Left ventricle myocardium inferior (tissue), 1 donor: ENCODE measurements at regions of chr3 and their contacts with region 1.

Region 1: DNA sequence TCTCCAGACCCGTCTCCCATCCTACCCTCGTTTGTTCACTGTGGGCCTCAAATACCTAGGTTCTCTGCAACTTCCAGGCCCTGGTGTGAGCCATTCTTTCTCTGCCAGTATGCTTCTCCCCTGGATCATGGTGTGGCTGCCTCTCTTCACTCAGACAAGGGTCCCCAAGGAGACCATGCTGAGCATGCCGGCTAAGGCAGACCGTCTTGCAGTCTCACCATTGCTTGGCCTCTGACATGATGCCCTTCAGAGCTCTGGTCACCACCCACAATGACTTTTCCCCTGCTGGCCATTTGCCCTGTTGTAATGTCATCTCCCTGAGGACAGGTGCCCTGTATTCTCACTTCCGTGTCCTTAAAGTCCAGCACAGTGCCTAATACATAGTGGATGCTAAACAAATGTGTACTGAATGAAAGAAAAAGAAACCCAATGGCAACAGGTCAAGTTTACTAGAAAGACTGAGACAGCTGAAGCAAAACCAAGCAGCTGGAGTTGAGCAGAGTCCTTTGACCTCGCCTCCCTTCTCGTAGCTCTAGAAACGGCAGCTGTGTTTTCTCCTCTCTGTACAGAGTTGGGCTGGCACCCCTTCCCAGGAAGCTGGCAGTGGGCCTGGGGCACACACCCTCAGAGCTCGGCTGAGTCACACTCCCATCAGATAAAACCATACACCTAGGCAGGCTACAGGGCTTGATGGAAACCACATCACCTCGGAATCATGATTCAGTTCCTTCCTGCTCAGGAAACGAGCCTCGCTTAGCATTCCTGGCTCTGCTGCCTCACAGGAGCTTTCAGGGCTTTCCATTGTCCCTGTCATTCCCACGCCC is 8.6 kb downstream of the TLR9 start:
- DNase-seq: peak; percentile 65
- H3K4me3 ChIP-seq: no peak overlapping the region
- H3K27ac ChIP-seq: peak overlapping the region; percentile 86
- H3K4me1 ChIP-seq: peaks cover 67% of the 10 kb centered on the region
- H3K27me3 ChIP-seq: no peaks in the 10 kb centered on the region
- CTCF ChIP-seq: no peak

Region 2: GRCh38 chr3:52022323-52023100 is 194.3 kb before region 1 on chr3:
- intact Hi-C with region 1: no loop called
- DNase-seq: peak; percentile 69
- H3K4me3 ChIP-seq: peak overlapping the region; percentile 65
- H3K27ac ChIP-seq: peak overlapping the region; percentile 92
- H3K4me1 ChIP-seq: peaks cover 96% of the 10 kb centered on the region
- H3K27me3 ChIP-seq: no peaks in the 10 kb centered on the region
- CTCF ChIP-seq: no peak

Region 3: GRCh38 chr3:52154117-52155094 is 62.4 kb before region 1 on chr3 and contains the start of gene POC1A:
- intact Hi-C with region 1: loop called (anchors 10 kb)
- DNase-seq: peak; percentile 96
- H3K4me3 ChIP-seq: peak within 1 kb of the TSS; percentile 84
- H3K27ac ChIP-seq: peak within 1 kb of the TSS; percentile 95
- H3K4me1 ChIP-seq: peaks cover 19% of the 10 kb centered on the region
- H3K27me3 ChIP-seq: no peaks in the 10 kb centered on the region
- CTCF ChIP-seq: peak; percentile 39
- total RNA-seq, gene POC1A: 1.2 TPM

Region 4: DNA sequence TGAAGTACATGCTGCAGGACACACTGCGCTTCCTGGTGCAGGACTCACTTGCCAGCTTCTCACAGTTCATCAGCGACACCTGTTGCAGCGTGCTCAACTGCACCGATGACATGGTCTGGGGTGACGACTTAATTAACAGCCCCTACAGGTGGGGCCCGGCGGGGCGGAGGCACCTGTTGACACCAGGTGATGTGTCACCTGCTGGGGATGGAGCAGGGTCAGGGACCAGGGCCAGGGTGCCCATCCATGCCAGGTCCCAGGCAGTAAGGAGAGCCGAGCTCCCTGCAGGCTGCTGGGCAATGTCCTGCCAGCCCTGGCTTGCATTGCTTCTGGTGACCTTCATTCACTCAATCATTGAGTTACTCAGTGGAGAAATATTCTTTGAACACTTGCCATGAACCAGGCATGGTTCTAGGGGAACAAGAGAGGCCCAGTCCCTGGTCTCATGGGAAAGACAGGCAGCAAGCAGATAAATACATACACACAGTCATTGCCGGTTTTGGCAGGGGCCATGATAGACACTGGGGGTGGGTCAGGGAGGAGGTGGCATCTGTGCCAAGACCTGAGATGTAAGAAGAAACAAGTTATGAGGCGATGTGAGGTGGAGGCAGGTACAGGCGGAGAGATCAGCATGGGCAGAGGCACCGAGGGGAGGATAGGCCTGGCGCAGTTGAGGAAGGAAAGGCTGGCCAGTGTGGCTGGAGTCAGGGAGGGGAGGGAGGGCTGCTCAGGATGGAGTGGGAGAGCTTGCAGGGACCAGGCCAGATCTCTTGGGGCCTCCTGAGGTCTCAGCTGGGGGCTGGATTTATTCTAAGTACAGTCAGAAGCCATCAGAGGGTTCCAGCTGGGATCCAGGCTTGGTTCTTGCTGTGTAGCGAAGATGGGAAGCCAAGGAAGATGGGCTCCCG is 130.1 kb after region 1 on chr3:
- intact Hi-C with region 1: no loop called
- DNase-seq: no peak
- H3K4me3 ChIP-seq: no peak overlapping the region
- H3K27ac ChIP-seq: peak overlapping the region; percentile 58
- H3K4me1 ChIP-seq: peaks cover 27% of the 10 kb centered on the region
- H3K27me3 ChIP-seq: no peaks in the 10 kb centered on the region
- CTCF ChIP-seq: no peak

Region 5: DNA sequence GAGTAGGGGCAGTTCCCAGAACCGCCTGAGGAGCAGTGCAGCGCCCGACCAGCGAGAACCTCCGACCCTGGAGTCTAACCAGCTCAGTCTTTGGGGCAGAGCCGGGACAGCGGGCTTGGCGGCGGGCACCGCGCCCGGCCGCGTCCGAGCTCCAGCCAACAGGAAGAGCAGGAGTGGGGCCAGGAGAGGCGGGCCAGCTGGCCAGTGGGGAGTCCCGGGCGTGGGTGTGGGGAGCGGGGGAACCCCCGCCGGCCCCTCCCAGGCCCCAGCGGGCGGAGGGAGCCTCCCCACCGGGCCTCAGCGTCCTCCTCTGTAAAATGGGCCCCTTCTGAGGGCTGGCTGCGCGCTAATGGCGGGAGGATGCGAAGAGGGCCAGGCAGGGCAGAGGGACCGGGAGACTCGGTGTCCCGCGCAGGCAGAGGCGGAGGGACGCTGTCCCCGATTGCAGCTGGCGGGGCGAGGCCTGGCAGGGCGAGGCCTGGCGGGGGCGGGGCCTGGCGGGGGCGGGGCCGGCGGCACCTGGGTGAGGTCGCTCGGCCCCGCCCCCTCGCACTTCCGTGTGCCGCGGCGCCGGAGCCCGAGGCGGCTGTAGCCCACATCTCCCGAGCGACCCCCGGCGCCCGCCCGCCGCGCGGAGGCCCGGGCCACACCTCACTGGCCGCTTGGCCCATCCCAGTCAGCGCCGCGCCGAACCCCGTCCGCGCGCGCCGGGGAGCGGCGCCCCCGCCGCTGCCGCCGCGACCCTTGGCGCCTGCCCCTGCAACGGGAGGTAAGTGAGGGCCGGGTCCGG is 944.1 kb after region 1 on chr3 and contains the start of gene PRKCD:
- intact Hi-C with region 1: no loop called
- DNase-seq: peak; percentile 84
- H3K4me3 ChIP-seq: peak within 1 kb of the TSS; percentile 82
- H3K27ac ChIP-seq: peak within 1 kb of the TSS; percentile 86
- H3K4me1 ChIP-seq: peaks cover 55% of the 10 kb centered on the region
- H3K27me3 ChIP-seq: peaks cover 8% of the 10 kb centered on the region
- CTCF ChIP-seq: peak; percentile 66
- total RNA-seq, gene PRKCD: 13.6 TPM